T-cell (primary cell): ENCODE measurements at regions of chr13 and their contacts with region 1.

Region 1: GRCh38 chr13:25746131-25746530 is 305.7 kb downstream of the SHISA2 start:
- DNase-seq: no peak
- ATAC-seq: no peak
- H3K4me3 ChIP-seq: no peak overlapping the region
- H3K4me3 Mint-ChIP-seq: no peak overlapping the region
- H3K27ac ChIP-seq: no peak overlapping the region
- H3K27ac Mint-ChIP-seq: no peak overlapping the region
- H3K4me1 ChIP-seq: no peaks in the 10 kb centered on the region
- H3K4me1 Mint-ChIP-seq: no peaks in the 10 kb centered on the region
- H3K27me3 ChIP-seq: peaks cover 0 to 6% of the 10 kb centered on the region in 2 experiments
- H3K27me3 Mint-ChIP-seq: peaks cover 2 to 5% of the 10 kb centered on the region in 2 donors

Region 2: GRCh38 chr13:25756251-25756650 is 10.1 kb after region 1 on chr13:
- CTCF ChIA-PET with region 1: interaction called in 1 of 2 experiments, 6 read pairs
- POLR2A ChIA-PET with region 1: interaction called in 1 of 2 experiments, 10 read pairs
- DNase-seq: no peak
- ATAC-seq: no peak
- H3K4me3 ChIP-seq: no peak overlapping the region
- H3K4me3 Mint-ChIP-seq: no peak overlapping the region
- H3K27ac ChIP-seq: no peak overlapping the region
- H3K27ac Mint-ChIP-seq: no peak overlapping the region
- H3K4me1 ChIP-seq: peaks cover 0 to 4% of the 10 kb centered on the region in 2 experiments
- H3K4me1 Mint-ChIP-seq: peaks cover 0 to 5% (median 2%) of the 10 kb centered on the region in 3 donors
- H3K27me3 ChIP-seq: no peaks in the 10 kb centered on the region
- H3K27me3 Mint-ChIP-seq: peaks cover 5 to 7% of the 10 kb centered on the region in 2 donors

Region 3: GRCh38 chr13:26721251-26722121 is 975.4 kb after region 1 on chr13:
- CTCF ChIA-PET with region 1: interaction called in 1 of 2 experiments, 10 read pairs
- POLR2A ChIA-PET with region 1: no interaction called
- DNase-seq: peak in 31 of 35 experiments; percentile 7 to 58 (median 22)
- ATAC-seq: peak; percentile 78 to 91 (median 90)
- H3K4me3 ChIP-seq: peak overlapping the region; percentile 21 to 62
- H3K4me3 Mint-ChIP-seq: peak overlapping the region; percentile 68 to 74 (median 72)
- H3K27ac ChIP-seq: peak overlapping the region; percentile 30
- H3K27ac Mint-ChIP-seq: peak overlapping the region; percentile 86 to 93
- H3K4me1 ChIP-seq: peaks cover 5 to 21% of the 10 kb centered on the region in 2 experiments
- H3K4me1 Mint-ChIP-seq: peaks cover 25 to 30% (median 25%) of the 10 kb centered on the region in 3 donors
- H3K27me3 ChIP-seq: peaks cover 0 to 10% of the 10 kb centered on the region in 2 experiments
- H3K27me3 Mint-ChIP-seq: no peaks in the 10 kb centered on the region